ENCODE measurements at regions of chr17 and their contacts with region 1.

Region 1: GRCh38 chr17:42566883-42567573 is at the start of gene MLX:
- DNase-seq: peak; percentile 85 to 95 (median 92)
- ATAC-seq: peak; percentile 76 to 81
- H3K4me3 Mint-ChIP-seq: peak within 1 kb of the TSS; percentile 86 to 99 (median 94)
- H3K27ac Mint-ChIP-seq: peak within 1 kb of the TSS; percentile 85 to 99 (median 94)
- H3K4me1 Mint-ChIP-seq: peaks cover 19 to 61% (median 51%) of the 10 kb centered on the region in 4 donors
- H3K27me3 Mint-ChIP-seq: no peaks in the 10 kb centered on the region
- polyA plus RNA-seq, gene MLX: 24.6 to 47.1 (median 25.0) TPM

Region 2: GRCh38 chr17:42519546-42520491 is 47.2 kb before region 1 on chr17:
- POLR2A ChIA-PET with region 1: no interaction called
- DNase-seq: no peak
- ATAC-seq: no peak
- H3K4me3 Mint-ChIP-seq: no peak overlapping the region
- H3K27ac Mint-ChIP-seq: no peak overlapping the region
- H3K4me1 Mint-ChIP-seq: peaks cover 6 to 8% (median 7%) of the 10 kb centered on the region in 4 donors
- H3K27me3 Mint-ChIP-seq: no peaks in the 10 kb centered on the region

Region 3: GRCh38 chr17:42536048-42536371 is 31.0 kb before region 1 on chr17 and contains the start of gene NAGLU:
- POLR2A ChIA-PET with region 1: interaction called, 19 read pairs
- DNase-seq: peak; percentile 55 to 87 (median 73)
- ATAC-seq: peak; percentile 75 to 79
- H3K4me3 Mint-ChIP-seq: peak within 1 kb of the TSS; percentile 77 to 91 (median 86)
- H3K27ac Mint-ChIP-seq: peak within 1 kb of the TSS; percentile 45 to 91 (median 83)
- H3K4me1 Mint-ChIP-seq: peaks cover 18 to 55% (median 50%) of the 10 kb centered on the region in 4 donors
- H3K27me3 Mint-ChIP-seq: no peaks in the 10 kb centered on the region
- polyA plus RNA-seq, gene NAGLU: 8.0 to 16.2 (median 13.4) TPM

Region 4: DNA sequence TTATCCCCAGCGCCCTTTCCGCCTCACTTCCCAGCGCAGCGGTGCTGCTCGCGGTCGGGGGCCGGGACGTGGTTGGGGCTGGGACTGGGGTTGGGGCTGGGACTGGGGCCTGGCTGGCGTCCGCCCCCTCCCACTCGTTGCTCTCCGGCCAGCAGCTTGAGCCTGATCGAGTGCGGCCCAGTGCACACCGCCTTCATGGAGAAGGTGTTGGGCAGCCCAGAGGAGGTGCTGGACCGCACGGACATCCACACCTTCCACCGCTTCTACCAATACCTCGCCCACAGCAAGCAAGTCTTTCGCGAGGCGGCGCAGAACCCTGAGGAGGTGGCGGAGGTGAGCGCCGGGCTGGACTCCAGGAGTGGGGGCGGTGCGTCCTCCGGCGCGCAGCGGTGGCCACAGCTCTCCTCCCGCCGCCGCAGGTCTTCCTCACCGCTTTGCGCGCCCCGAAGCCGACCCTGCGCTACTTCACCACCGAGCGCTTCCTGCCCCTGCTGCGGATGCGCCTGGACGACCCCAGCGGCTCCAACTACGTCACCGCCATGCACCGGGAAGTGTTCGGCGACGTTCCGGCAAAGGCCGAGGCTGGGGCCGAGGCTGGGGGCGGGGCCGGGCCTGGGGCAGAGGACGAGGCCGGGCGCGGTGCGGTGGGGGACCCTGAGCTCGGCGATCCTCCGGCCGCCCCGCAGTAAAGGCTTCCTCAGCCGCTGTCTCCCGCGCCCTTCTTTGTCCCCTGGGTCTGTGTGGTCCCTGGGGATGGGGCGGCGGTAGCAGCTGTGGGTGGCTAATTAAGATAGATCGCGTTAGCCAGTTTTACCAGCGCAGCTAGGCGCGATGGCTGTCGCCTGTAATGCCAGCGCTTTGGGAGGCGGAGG is 12.5 kb before region 1 on chr17:
- POLR2A ChIA-PET with region 1: interaction called, 16 read pairs
- DNase-seq: peak; percentile 61 to 88 (median 74)
- ATAC-seq: peak; percentile 91 to 93
- H3K4me3 Mint-ChIP-seq: peak overlapping the region; percentile 84 to 95 (median 92)
- H3K27ac Mint-ChIP-seq: peak overlapping the region; percentile 83 to 96 (median 94)
- H3K4me1 Mint-ChIP-seq: peaks cover 11 to 51% (median 33%) of the 10 kb centered on the region in 4 donors
- H3K27me3 Mint-ChIP-seq: no peaks in the 10 kb centered on the region

Region 5: DNA sequence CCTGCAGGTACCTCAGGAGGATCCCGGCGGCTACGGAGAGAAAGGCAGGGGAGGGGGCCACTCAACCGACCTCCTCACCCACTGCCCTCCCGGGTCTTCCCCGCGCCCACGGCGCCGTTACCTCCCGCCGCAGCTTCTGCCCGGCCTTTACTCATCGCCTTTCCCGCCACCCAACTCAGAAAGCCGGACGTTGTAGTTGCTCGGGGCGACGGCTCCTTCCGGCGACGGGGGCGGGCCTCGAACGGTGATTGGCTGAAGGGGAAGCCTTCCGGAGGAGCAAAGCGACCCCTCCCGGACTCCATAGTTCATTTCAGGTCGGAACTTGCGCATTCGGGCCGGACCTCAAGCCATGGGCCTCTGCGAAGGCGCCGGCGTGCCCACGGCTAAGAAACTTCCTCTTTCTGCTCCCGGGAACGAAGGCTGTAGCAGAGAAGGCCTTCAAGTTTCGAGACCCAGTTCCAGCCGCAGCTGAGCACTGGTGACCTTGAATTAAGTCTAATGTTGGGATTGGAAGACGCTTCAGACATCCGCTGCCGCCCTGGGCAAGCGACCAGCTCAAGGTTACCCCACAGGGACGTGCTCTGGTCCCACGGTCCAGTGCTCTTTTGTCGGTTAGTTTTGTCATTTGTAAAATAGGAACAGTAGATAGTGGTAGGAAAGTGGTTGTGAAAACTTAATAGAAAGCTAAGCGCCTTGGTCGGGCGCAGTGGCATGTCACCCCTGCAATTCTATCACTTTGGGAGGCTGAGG is 10.7 kb after region 1 on chr17 and contains the start of gene PSMC3IP:
- POLR2A ChIA-PET with region 1: interaction called, 41 read pairs
- DNase-seq: peak; percentile 81 to 94 (median 86)
- ATAC-seq: peak; percentile 93
- H3K4me3 Mint-ChIP-seq: peak within 1 kb of the TSS; percentile 90 to 100 (median 98)
- H3K27ac Mint-ChIP-seq: peak within 1 kb of the TSS; percentile 86 to 99 (median 96)
- H3K4me1 Mint-ChIP-seq: peaks cover 14 to 39% (median 32%) of the 10 kb centered on the region in 4 donors
- H3K27me3 Mint-ChIP-seq: no peaks in the 10 kb centered on the region
- polyA plus RNA-seq, gene PSMC3IP: 0.69 to 1.1 (median 0.71) TPM

Region 6: GRCh38 chr17:42609182-42609813 is 42.3 kb after region 1 on chr17 and contains the starts of genes RETREG3 and TUBG1:
- POLR2A ChIA-PET with region 1: interaction called, 23 read pairs
- DNase-seq: peak; percentile 95 to 100 (median 99)
- ATAC-seq: peak; percentile 88 to 91
- H3K4me3 Mint-ChIP-seq: peak within 1 kb of the TSS; percentile 97 to 100 (median 100)
- H3K27ac Mint-ChIP-seq: peak within 1 kb of the TSS; percentile 94 to 100 (median 99)
- H3K4me1 Mint-ChIP-seq: peaks cover 25 to 54% (median 49%) of the 10 kb centered on the region in 4 donors
- H3K27me3 Mint-ChIP-seq: no peaks in the 10 kb centered on the region
- polyA plus RNA-seq, gene RETREG3: 119 to 131 (median 122) TPM
- polyA plus RNA-seq, gene TUBG1: 6.7 to 10.3 (median 7.8) TPM

Region 7: GRCh38 chr17:43006639-43007551 is 439.9 kb after region 1 on chr17 and contains the start of gene IFI35:
- POLR2A ChIA-PET with region 1: no interaction called
- DNase-seq: peak; percentile 66 to 91 (median 82)
- ATAC-seq: peak; percentile 99
- H3K4me3 Mint-ChIP-seq: peak within 1 kb of the TSS; percentile 98 to 100 (median 99)
- H3K27ac Mint-ChIP-seq: peak within 1 kb of the TSS; percentile 98 to 100 (median 99)
- H3K4me1 Mint-ChIP-seq: peaks cover 8 to 35% (median 27%) of the 10 kb centered on the region in 4 donors
- H3K27me3 Mint-ChIP-seq: no peaks in the 10 kb centered on the region
- polyA plus RNA-seq, gene IFI35: 44.8 to 49.8 (median 47.2) TPM